CD8-positive, alpha-beta T cell (primary cell): ENCODE measurements at regions of chr15 and their contacts with region 1.

Region 1: GRCh38 chr15:41989259-41989933 is 17.0 kb upstream of the EHD4 start:
- DNase-seq: peak; percentile 64 to 88 (median 77)
- ATAC-seq: peak; percentile 99
- H3K4me3 ChIP-seq: no peak overlapping the region
- H3K4me3 Mint-ChIP-seq: no peak overlapping the region
- H3K27ac ChIP-seq: no peak overlapping the region
- H3K27ac Mint-ChIP-seq: no peak overlapping the region
- H3K4me1 ChIP-seq: no peaks in the 10 kb centered on the region
- H3K4me1 Mint-ChIP-seq: no peaks in the 10 kb centered on the region
- H3K27me3 ChIP-seq: peaks cover 0 to 2% of the 10 kb centered on the region in 2 experiments
- H3K27me3 Mint-ChIP-seq: peaks cover 3% of the 10 kb centered on the region
- CTCF ChIP-seq: peak; percentile 90

Region 2: DNA sequence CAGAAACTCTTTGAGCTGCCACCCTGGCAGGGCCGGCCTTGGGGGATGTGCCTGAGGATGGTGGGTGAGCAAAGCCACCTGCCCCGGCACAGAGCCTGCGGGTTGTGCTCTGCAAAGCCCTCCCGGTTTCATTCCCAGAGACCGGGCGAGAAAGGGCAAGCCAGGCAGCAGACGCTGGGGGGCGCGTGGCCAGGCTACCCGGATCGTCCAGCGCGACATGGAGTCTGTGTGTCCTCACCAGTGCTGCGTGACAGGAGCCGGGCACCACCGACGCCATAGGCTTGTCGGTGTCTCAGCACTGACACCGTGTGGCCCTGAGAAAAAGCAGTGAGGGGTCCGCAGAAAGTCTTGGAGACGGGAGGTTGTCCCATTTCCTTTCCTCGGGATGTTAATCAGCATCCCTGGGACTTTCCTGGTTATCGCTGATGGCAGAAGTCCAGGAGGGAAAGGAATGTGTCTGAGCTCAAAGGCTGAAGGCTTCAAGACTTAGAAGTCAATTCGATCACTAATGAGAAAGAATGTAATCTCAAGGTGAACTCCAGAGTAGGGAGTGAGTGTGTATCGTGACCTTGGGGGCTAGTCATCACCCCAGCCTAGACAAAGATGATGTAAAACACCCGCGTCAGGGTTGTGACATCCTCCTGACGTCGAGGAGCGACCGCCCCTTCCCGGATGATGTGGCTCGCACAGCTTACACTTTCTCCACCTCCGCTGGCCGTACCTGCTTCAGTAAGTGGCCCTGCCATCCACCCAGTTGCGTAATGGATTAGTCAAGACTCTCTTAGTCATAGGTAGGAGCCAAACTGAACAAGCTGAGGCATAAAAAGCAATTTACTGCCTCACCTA is 67.8 kb after region 1 on chr15:
- CTCF ChIA-PET with region 1: interaction called, 43 read pairs
- POLR2A ChIA-PET with region 1: no interaction called
- intact Hi-C with region 1: loop called (anchors 1 kb)
- DNase-seq: peak in 6 of 9 experiments; percentile 32 to 76 (median 62)
- ATAC-seq: peak; percentile 78
- H3K4me3 ChIP-seq: peak overlapping the region; percentile 34 to 45
- H3K4me3 Mint-ChIP-seq: peak overlapping the region; percentile 64
- H3K27ac ChIP-seq: peak overlapping the region in 1 of 2 experiments; percentile 4
- H3K27ac Mint-ChIP-seq: peak overlapping the region; percentile 85
- H3K4me1 ChIP-seq: no peaks in the 10 kb centered on the region
- H3K4me1 Mint-ChIP-seq: peaks cover 7% of the 10 kb centered on the region
- H3K27me3 ChIP-seq: no peaks in the 10 kb centered on the region
- H3K27me3 Mint-ChIP-seq: peaks cover 29% of the 10 kb centered on the region
- CTCF ChIP-seq: peak; percentile 41

Region 3: GRCh38 chr15:42084460-42085235 is 95.3 kb after region 1 on chr15:
- CTCF ChIA-PET with region 1: interaction called, 31 read pairs
- POLR2A ChIA-PET with region 1: no interaction called
- intact Hi-C with region 1: loop called (anchors 1 kb)
- DNase-seq: peak in 8 of 9 experiments; percentile 14 to 67 (median 41)
- ATAC-seq: peak; percentile 51
- H3K4me3 ChIP-seq: no peak overlapping the region
- H3K4me3 Mint-ChIP-seq: no peak overlapping the region
- H3K27ac ChIP-seq: no peak overlapping the region
- H3K27ac Mint-ChIP-seq: no peak overlapping the region
- H3K4me1 ChIP-seq: peaks cover 6% of the 10 kb centered on the region
- H3K4me1 Mint-ChIP-seq: peaks cover 3% of the 10 kb centered on the region
- H3K27me3 ChIP-seq: no peaks in the 10 kb centered on the region
- H3K27me3 Mint-ChIP-seq: peaks cover 9% of the 10 kb centered on the region
- CTCF ChIP-seq: peak; percentile 83

Region 4: GRCh38 chr15:42137431-42138261 is 148.2 kb after region 1 on chr15:
- CTCF ChIA-PET with region 1: interaction called, 10 read pairs
- POLR2A ChIA-PET with region 1: no interaction called
- intact Hi-C with region 1: loop called in 1 of 2 experiments (anchors 1 kb)
- DNase-seq: peak in 3 of 9 experiments; percentile 32 to 48 (median 41)
- ATAC-seq: peak; percentile 34
- H3K4me3 ChIP-seq: no peak overlapping the region
- H3K4me3 Mint-ChIP-seq: no peak overlapping the region
- H3K27ac ChIP-seq: no peak overlapping the region
- H3K27ac Mint-ChIP-seq: no peak overlapping the region
- H3K4me1 ChIP-seq: no peaks in the 10 kb centered on the region
- H3K4me1 Mint-ChIP-seq: no peaks in the 10 kb centered on the region
- H3K27me3 ChIP-seq: no peaks in the 10 kb centered on the region
- H3K27me3 Mint-ChIP-seq: no peaks in the 10 kb centered on the region
- CTCF ChIP-seq: peak; percentile 42

Region 5: DNA sequence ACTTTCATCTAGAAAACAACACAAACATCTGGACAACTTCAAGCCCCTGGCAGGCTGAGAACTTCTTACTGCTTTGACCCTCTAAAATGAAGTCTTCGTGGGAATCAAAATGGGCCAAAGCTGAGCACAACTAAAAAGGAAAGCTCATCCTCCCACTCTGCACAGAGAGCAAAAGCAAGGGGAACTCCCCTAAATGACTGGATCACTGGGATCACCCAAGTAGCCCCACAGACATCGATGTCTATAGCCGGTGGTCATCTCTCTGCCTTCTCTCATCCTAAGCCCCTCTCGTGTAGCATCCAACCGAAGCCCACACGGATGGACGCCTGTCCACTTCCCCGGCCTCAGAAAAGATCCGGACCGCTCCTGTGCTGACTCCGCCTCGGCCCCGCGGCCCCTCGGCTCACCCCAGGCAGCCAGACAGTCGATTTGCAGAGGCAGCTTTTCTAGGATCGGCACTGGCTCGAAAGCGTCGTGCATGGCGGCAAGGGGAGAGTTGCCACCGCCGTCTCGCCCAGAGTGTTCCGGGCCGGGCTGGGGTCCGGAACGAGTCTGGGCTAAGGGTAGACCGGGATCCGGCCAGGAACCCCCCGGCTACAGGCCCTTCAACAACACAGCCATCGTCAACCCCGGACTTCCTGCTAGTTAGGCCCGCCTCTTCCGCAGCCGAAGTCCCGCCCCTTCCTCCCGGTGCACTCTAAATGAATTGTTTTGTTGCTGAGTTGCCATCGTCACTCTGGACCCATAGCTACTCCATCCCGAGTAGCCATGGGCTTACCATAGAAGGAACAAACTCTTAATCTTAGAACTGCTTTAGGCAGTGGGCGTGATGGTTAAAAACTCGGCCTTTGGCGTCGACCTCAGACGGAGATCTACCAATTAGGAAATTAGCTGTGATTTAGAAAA is 218.5 kb after region 1 on chr15 and contains the start of gene VPS39:
- CTCF ChIA-PET with region 1: no interaction called
- POLR2A ChIA-PET with region 1: no interaction called
- intact Hi-C with region 1: no loop called
- DNase-seq: peak; percentile 65 to 90 (median 85)
- ATAC-seq: peak; percentile 98
- H3K4me3 ChIP-seq: peak within 1 kb of the TSS; percentile 73 to 96
- H3K4me3 Mint-ChIP-seq: peak within 1 kb of the TSS; percentile 97
- H3K27ac ChIP-seq: peak within 1 kb of the TSS; percentile 83 to 84
- H3K27ac Mint-ChIP-seq: peak within 1 kb of the TSS; percentile 95
- H3K4me1 ChIP-seq: peaks cover 23% of the 10 kb centered on the region
- H3K4me1 Mint-ChIP-seq: peaks cover 40% of the 10 kb centered on the region
- H3K27me3 ChIP-seq: no peaks in the 10 kb centered on the region
- H3K27me3 Mint-ChIP-seq: no peaks in the 10 kb centered on the region
- CTCF ChIP-seq: no peak
- total RNA-seq, gene VPS39: 81.5 to 82.9 TPM

Region 6: DNA sequence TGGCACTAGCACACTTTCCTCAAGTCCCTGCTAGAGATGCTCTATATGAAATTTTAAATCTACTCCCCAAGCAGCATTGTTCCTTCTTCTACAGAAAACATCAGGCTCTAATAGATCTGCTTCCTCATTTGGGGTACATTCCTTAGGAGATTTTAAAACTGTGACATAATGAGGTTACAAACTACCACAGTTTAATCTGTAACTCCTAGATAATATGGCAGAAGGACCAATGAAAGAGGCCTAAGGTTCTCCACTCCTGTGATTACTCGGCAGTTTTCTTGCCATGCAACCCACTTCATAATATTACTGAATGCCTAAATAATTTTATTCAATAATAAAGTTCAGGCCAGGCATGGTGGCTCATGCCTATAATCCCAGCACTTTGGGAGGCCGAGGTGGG is 485.4 kb after region 1 on chr15:
- CTCF ChIA-PET with region 1: no interaction called
- POLR2A ChIA-PET with region 1: no interaction called
- intact Hi-C with region 1: loop called (anchors 1 to 5 kb)
- DNase-seq: no peak
- ATAC-seq: no peak
- H3K4me3 ChIP-seq: no peak overlapping the region
- H3K4me3 Mint-ChIP-seq: no peak overlapping the region
- H3K27ac ChIP-seq: no peak overlapping the region
- H3K27ac Mint-ChIP-seq: peak overlapping the region; percentile 37
- H3K4me1 ChIP-seq: no peaks in the 10 kb centered on the region
- H3K4me1 Mint-ChIP-seq: peaks cover 9% of the 10 kb centered on the region
- H3K27me3 ChIP-seq: no peaks in the 10 kb centered on the region
- H3K27me3 Mint-ChIP-seq: no peaks in the 10 kb centered on the region
- CTCF ChIP-seq: no peak

Region 7: DNA sequence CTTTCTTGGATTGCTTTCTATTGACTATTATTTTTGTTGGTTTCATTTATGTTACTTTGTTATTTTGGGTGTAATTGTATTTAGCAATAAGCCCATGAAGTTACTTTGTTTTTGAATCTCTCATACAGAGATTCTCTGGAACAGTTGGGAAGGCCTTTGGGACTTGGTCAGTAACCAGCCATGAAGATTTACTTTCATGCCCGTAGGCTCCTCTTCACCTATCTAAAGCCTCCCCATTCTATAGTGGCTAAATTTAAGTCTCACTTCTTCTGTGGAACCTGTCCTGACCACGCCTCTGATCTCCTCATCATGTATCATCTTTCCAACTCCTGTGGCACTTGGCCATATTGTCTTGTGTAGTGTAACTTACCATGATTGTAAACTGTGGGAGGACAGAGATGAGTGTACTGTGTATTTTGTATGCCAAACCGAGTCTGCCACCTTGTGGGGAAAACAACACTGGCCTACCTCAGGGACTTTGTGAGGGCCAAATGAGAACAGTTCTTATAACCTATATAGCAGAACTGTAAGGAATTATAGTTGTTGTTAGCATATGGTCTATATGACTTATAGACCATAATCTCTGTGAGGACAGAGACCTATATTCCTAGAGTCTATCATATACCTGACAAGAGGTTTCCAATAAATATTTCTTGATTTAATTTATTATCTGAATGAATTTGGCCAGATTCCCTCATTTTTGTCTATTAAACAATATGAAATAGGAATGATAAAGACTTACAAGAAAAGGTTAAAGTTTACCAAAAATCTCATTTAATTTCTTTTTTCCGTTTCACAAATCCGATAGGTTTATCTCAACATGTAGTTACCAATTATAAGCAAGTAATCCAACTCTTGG is 661.0 kb after region 1 on chr15:
- CTCF ChIA-PET with region 1: no interaction called
- POLR2A ChIA-PET with region 1: no interaction called
- intact Hi-C with region 1: loop called in 1 of 2 experiments (anchors 2 kb)
- DNase-seq: peak; percentile 26 to 76 (median 56)
- ATAC-seq: peak; percentile 85
- H3K4me3 ChIP-seq: no peak overlapping the region
- H3K4me3 Mint-ChIP-seq: no peak overlapping the region
- H3K27ac ChIP-seq: no peak overlapping the region
- H3K27ac Mint-ChIP-seq: no peak overlapping the region
- H3K4me1 ChIP-seq: no peaks in the 10 kb centered on the region
- H3K4me1 Mint-ChIP-seq: peaks cover 2% of the 10 kb centered on the region
- H3K27me3 ChIP-seq: no peaks in the 10 kb centered on the region
- H3K27me3 Mint-ChIP-seq: no peaks in the 10 kb centered on the region
- CTCF ChIP-seq: peak; percentile 66